ENCODE measurements at regions of chr6 and their contacts with region 1.

Region 1: GRCh38 chr6:56902641-56903464 is 52.1 kb upstream of the BEND6 start:
- DNase-seq: no peak
- ATAC-seq: peak; percentile 80
- H3K4me3 ChIP-seq: no peak overlapping the region
- H3K27ac ChIP-seq: no peak overlapping the region
- H3K4me1 ChIP-seq: no peaks in the 10 kb centered on the region
- H3K27me3 ChIP-seq: no peaks in the 10 kb centered on the region
- CTCF ChIP-seq: peak; percentile 61 to 65 (median 61); a peak in 5 of 6 replicates
- EP300 ChIP-seq: no peak
- POLR2A ChIP-seq: no peak
- RAD21 ChIP-seq: peak; percentile 80

Region 2: DNA sequence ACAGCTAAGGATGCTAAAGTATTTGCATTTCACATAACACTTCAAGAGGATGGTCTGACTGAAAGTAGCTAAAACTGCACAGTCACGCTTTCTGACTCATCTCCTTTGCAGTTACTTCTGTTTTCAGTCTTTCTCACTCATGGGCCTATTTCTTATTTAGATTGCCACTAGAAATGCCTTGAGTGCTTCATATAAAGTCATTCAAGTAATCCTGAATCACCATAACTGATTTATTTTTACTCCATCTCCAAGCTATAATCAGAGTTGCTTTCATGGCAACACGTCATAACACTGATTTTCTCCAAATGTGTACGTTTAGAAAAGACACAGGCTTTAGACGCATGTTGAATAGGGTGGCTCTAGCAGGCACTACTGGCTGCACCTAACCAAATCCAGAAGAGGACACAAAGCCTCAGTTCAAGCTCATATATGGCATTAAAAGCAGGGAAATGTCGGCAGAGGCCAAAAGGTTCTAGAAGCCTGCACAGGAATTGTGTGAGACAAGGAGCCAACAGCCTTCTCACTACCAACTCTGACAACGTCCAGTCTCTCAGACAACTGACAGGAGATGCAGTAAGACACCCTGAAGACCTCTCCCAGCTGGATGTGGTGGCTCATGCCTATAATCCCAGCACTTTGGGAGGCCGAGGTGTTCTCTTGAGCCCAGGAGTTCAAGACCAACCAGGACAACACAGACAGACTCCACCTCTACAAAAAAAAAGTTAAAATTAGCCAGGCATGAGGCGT is 12.0 kb before region 1 on chr6:
- CTCF ChIA-PET with region 1: interaction called, 66 read pairs
- POLR2A ChIA-PET with region 1: interaction called, 3 read pairs
- RAD21 ChIA-PET with region 1: interaction called, 14 read pairs
- SMC1A ChIA-PET with region 1: interaction called, 23 read pairs
- in situ Hi-C with region 1: no loop called
- intact Hi-C with region 1: no loop called
- DNase-seq: peak; percentile 92
- ATAC-seq: peak; percentile 94
- H3K4me3 ChIP-seq: peak overlapping the region; percentile 43; the same call in 1 of the 2 replicates
- H3K27ac ChIP-seq: peak overlapping the region; percentile 95
- H3K4me1 ChIP-seq: peaks cover 30% of the 10 kb centered on the region
- H3K27me3 ChIP-seq: no peaks in the 10 kb centered on the region
- CTCF ChIP-seq: no peak
- EP300 ChIP-seq: peak; percentile 78 to 86; a peak in 3 of 4 replicates
- POLR2A ChIP-seq: no peak
- RAD21 ChIP-seq: no peak

Region 3: DNA sequence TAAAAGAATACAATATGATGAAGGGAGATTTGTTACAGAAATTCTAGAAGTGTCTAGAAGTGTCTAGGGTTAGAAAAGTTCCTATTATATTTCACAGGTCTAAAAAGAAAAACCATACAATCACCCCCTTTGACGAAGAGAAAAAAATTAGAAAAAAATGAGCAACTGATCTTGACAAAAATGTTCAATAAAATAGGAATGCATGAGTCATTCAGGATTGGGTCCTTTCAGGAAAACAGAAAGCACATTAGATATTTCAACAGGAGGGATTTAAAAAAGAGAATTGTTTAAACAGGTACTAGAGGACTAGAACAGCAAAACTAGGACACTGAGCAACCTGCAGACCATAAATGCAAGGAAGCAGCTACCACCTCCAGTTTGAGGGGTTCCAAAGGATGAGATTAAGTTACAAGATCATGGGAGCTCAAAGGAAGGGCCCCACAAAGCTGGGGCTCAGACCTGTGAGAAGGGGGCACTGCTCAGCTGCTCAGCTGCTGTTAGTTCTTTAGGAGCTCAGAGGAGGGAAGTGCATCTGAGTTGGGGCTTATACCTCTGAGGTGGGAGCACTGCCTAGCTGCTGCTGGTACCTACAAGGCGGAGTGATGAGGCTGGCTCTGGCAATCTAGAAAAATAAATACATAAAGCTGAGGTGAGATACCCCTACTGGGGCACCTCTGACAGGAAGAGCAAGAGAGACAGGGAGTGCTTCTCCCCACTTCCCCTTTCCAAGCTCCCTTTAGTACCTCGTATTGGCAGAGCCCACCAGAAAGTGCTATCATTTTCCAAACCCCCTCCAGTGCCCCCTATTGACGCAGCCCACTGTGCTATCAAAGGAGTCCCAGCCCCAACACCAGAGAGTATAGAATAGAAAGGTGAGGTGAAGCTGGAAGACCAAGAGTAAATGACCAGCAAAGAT is 24.9 kb after region 1 on chr6:
- CTCF ChIA-PET with region 1: interaction called, 66 read pairs
- POLR2A ChIA-PET with region 1: no interaction called
- RAD21 ChIA-PET with region 1: interaction called, 9 read pairs
- SMC1A ChIA-PET with region 1: interaction called, 6 read pairs
- in situ Hi-C with region 1: no loop called
- intact Hi-C with region 1: no loop called
- DNase-seq: no peak
- ATAC-seq: peak; percentile 72
- H3K4me3 ChIP-seq: no peak overlapping the region
- H3K27ac ChIP-seq: no peak overlapping the region
- H3K4me1 ChIP-seq: no peaks in the 10 kb centered on the region
- H3K27me3 ChIP-seq: no peaks in the 10 kb centered on the region
- CTCF ChIP-seq: no peak
- EP300 ChIP-seq: no peak
- POLR2A ChIP-seq: no peak
- RAD21 ChIP-seq: no peak

Region 4: GRCh38 chr6:56962451-56962850 is 59.6 kb after region 1 on chr6:
- CTCF ChIA-PET with region 1: interaction called, 200 read pairs
- POLR2A ChIA-PET with region 1: no interaction called
- RAD21 ChIA-PET with region 1: interaction called, 26 read pairs
- SMC1A ChIA-PET with region 1: interaction called, 18 read pairs
- in situ Hi-C with region 1: no loop called
- intact Hi-C with region 1: no loop called
- DNase-seq: no peak
- ATAC-seq: no peak
- H3K4me3 ChIP-seq: no peak overlapping the region
- H3K27ac ChIP-seq: no peak overlapping the region
- H3K4me1 ChIP-seq: no peaks in the 10 kb centered on the region
- H3K27me3 ChIP-seq: no peaks in the 10 kb centered on the region
- CTCF ChIP-seq: no peak
- EP300 ChIP-seq: no peak
- POLR2A ChIP-seq: no peak
- RAD21 ChIP-seq: no peak

Region 5: GRCh38 chr6:57078531-57079207 is 175.8 kb after region 1 on chr6:
- CTCF ChIA-PET with region 1: no interaction called
- POLR2A ChIA-PET with region 1: no interaction called
- RAD21 ChIA-PET with region 1: no interaction called
- SMC1A ChIA-PET with region 1: no interaction called
- in situ Hi-C with region 1: no loop called
- intact Hi-C with region 1: no loop called
- DNase-seq: no peak
- ATAC-seq: no peak
- H3K4me3 ChIP-seq: no peak overlapping the region
- H3K27ac ChIP-seq: no peak overlapping the region
- H3K4me1 ChIP-seq: no peaks in the 10 kb centered on the region
- H3K27me3 ChIP-seq: no peaks in the 10 kb centered on the region
- CTCF ChIP-seq: no peak
- EP300 ChIP-seq: no peak
- POLR2A ChIP-seq: no peak
- RAD21 ChIP-seq: no peak

Region 6: DNA sequence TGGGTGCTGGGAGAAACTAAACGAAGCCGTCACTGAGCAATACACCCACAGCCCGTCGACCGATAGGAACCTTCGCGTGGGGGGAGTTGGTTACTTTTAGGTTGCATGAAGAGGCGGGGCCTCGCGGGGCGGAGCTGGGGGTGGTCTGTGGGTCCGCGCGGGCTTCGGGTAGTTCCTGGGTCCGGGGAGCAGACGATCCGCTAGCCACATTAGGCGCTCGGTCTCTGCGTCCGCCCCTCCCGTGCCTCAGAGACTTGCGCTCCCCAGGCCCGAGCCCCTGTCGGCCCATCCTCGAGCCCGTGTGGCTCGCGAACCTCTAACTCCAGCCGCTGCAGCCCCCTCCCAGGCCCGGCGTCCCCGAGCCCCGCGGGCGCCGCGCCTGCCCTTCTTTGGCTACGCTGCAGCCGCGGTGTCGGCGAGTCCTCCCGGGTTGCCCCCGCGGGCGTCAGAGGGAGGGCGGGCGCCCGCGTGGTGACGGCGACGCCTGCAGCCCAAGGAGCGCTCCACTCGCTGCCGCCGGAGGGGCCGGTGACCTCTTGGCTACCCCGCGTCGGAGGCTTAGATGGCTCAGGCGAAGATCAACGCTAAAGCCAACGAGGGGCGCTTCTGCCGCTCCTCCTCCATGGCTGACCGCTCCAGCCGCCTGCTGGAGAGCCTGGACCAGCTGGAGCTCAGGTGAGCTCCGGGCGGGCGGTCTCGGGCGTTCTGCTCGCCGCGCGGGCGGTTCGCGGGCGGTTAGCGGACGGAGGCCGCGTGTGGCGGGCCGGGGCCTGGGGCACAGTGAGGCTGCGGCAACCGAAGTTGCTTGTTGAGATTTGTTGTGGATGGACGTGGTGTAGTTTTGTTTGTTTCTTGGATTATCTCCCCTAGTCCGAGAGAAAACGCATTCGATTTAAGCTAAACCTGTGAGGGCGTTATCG is 269.5 kb after region 1 on chr6 and contains the start of gene BAG2:
- CTCF ChIA-PET with region 1: interaction called, 4 read pairs
- POLR2A ChIA-PET with region 1: no interaction called
- RAD21 ChIA-PET with region 1: interaction called, 5 read pairs
- SMC1A ChIA-PET with region 1: interaction called, 7 read pairs
- in situ Hi-C with region 1: no loop called
- intact Hi-C with region 1: loop called (anchors 5 kb)
- DNase-seq: peak; percentile 68
- ATAC-seq: peak; percentile 91
- H3K4me3 ChIP-seq: peak within 1 kb of the TSS; percentile 84
- H3K27ac ChIP-seq: peak within 1 kb of the TSS; percentile 86
- H3K4me1 ChIP-seq: no peaks in the 10 kb centered on the region
- H3K27me3 ChIP-seq: no peaks in the 10 kb centered on the region
- CTCF ChIP-seq: 0 out of 6 replicates have a peak, but pooled peaks have one; percentile 10 to 19 (median 18)
- EP300 ChIP-seq: no peak
- POLR2A ChIP-seq: peak; percentile 95
- RAD21 ChIP-seq: no peak
- polyA plus RNA-seq, gene BAG2: 8.9 to 10.8 TPM